ENCODE measurements at regions of chr20 and their contacts with region 1.

Region 1: DNA sequence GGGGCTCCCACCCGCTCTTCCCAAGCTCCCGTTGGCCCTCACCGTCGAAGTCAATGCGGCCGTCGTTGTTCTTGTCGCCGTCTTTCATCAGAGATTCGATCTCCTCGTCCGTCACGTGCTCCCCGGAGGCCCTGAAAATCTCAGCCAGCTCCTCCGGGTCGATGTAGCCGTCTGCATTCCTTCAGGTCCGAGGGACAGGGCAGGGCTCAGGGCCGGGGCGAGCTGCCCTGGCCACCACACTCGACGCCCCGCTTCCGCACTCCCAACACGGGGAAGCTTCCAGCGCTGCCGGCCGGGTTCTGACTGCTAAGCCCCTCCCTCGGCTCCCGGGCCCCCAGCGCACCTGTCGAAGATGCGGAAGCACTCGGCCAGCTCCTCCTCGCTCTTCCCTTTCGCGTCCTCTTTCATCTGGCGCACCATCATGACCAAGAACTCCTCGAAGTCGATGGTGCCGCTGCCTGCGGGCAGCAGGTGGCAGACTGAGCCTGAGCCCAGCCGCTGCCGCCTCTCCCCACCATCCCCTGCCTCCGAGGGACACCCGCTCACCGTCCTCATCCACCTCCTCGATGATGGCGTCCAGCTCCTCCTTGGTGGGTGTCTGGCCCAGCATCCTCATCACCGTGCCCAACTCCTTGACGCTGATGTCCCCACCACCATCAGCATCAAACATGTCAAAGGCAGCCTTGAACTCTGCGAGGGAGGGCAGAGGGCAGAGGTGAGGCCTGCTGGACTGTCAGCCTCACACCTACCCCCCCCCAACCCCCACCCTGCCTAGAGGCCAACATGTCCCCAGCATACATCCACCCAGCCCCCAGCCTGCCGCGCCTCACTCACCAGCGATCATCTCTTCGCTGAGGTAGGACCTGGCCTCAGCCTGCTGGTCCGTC is 2.9 kb downstream of the TNNC2 start:
- DNase-seq: peak; percentile 53 to 77
- H3K4me3 ChIP-seq: peak overlapping the region in 3 of 4 experiments; percentile 5 to 44 (median 6); a peak in 4 of 8 replicates
- H3K27ac ChIP-seq: no peak overlapping the region
- H3K4me1 ChIP-seq: peaks cover 0 to 12% (median 5%) of the 10 kb centered on the region in 4 experiments; a peak in 6 of 7 replicates
- H3K27me3 ChIP-seq: peaks cover 0 to 12% (median 10%) of the 10 kb centered on the region in 4 experiments; a peak in 4 of 7 replicates
- CTCF ChIP-seq: peak; percentile 58 to 78 (median 72)
- EP300 ChIP-seq: no peak
- POLR2A ChIP-seq: 0 out of 3 replicates have a peak, but pooled peaks of 1 of the 2 experiments have one; percentile 42
- RAD21 ChIP-seq: peak; percentile 74 to 77

Region 2: GRCh38 chr20:45812157-45813020 is 11.8 kb before region 1 on chr20 and contains the start of gene UBE2C:
- CTCF ChIA-PET with region 1: interaction called, 11 read pairs
- POLR2A ChIA-PET with region 1: interaction called, 96 read pairs
- DNase-seq: peak; percentile 96 to 99
- H3K4me3 ChIP-seq: peak within 1 kb of the TSS; percentile 91 to 100 (median 98)
- H3K27ac ChIP-seq: peak within 1 kb of the TSS; percentile 74; the same call in 1 of the 2 replicates
- H3K4me1 ChIP-seq: peaks cover 0 to 4% (median 2%) of the 10 kb centered on the region in 4 experiments; a peak in 3 of 7 replicates
- H3K27me3 ChIP-seq: no peaks in the 10 kb centered on the region
- CTCF ChIP-seq: no peak
- EP300 ChIP-seq: no peak
- POLR2A ChIP-seq: peak; percentile 47 to 64; a peak in 2 of 3 replicates
- RAD21 ChIP-seq: no peak
- total RNA-seq, gene UBE2C: 243 and 255 TPM in 2 replicates

Region 3: GRCh38 chr20:45842169-45842812 is 18.1 kb after region 1 on chr20:
- CTCF ChIA-PET with region 1: interaction called, 7 read pairs
- POLR2A ChIA-PET with region 1: interaction called, 58 read pairs
- DNase-seq: no peak
- H3K4me3 ChIP-seq: no peak overlapping the region
- H3K27ac ChIP-seq: no peak overlapping the region
- H3K4me1 ChIP-seq: no peaks in the 10 kb centered on the region
- H3K27me3 ChIP-seq: no peaks in the 10 kb centered on the region
- CTCF ChIP-seq: no peak
- EP300 ChIP-seq: no peak
- POLR2A ChIP-seq: no peak
- RAD21 ChIP-seq: no peak

Region 4: GRCh38 chr20:46485431-46485830 is 661.2 kb after region 1 on chr20:
- CTCF ChIA-PET with region 1: no interaction called
- POLR2A ChIA-PET with region 1: no interaction called
- DNase-seq: no peak
- H3K4me3 ChIP-seq: peak overlapping the region in 1 of 4 experiments; percentile 1; a peak in 1 of 8 replicates
- H3K27ac ChIP-seq: no peak overlapping the region
- H3K4me1 ChIP-seq: peaks cover 0 to 3% (median 0%) of the 10 kb centered on the region in 4 experiments; a peak in 2 of 7 replicates
- H3K27me3 ChIP-seq: no peaks in the 10 kb centered on the region
- CTCF ChIP-seq: no peak
- EP300 ChIP-seq: no peak
- POLR2A ChIP-seq: no peak
- RAD21 ChIP-seq: no peak